Heart right ventricle (tissue), 16 donors: ENCODE measurements at regions of chr14 and their contacts with region 1.

Region 1: DNA sequence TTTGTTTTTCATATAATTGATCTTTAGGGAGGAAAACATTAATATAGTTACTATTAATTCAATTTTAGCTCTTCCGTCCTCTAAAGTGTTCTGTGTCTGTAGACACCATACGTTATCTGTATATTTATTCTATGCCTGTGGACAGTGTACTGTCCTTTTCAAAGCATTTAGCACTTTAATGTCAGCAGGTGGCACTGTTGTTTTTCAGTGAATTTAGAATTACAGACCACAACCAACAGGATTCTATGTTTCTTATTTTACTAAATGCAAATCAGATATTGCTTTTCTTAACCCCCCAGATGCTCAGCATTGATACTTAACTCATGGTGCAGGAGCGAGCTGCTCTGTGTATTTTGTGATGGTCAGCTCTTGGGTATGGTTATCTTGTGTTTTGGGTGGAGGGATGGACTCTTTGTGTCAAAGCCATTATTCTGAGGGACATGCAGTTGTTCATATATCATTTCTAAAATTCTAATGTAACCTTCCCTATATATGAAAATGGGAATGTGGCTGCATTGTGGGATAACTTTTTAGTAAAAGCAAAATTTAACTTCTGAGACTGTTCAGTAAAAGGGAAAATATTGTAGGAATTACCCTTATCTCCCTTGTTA is 65.2 kb downstream of the PAPOLA start:
- DNase-seq: no peak
- ATAC-seq: peak in 2 of 8 donors; percentile 42 to 47
- H3K4me3 ChIP-seq: no peak overlapping the region
- H3K27ac ChIP-seq: no peak overlapping the region
- H3K4me1 ChIP-seq: no peaks in the 10 kb centered on the region
- H3K27me3 ChIP-seq: no peaks in the 10 kb centered on the region
- CTCF ChIP-seq: peak; percentile 16 to 63 (median 53)

Region 2: DNA sequence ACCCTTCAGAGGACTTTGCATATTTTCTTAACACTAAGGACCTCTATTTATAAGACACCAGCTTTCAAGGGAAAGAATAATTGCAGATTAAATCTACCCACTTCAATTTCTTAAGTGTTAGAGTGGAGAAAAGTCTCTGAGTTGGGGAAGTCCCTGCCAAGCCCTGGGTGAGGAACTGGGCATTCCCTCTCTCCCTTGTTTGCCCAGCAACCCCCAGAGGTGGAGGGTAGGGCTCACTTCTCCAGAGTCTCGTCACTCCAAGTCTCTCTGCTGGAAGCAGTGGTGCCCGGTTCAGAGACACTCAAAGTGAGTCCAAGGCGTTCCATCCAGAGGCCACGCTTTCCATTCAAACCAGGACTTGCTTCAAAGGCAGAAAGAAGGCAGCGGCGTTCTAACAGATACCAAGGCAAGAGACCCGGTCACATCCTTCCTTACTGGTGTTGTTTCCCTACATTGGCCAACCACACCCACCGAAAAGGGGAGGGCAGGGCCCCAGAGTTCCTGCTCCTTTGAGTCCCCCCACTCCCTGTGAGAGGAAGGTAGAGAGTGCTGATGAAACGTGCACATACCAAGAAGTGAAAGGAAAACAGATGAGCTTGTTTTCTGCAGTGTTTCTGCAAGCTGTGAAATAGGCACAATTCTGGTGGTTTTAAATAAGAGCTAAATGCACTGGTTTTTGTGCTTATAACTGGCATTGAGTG is 368.8 kb before region 1 on chr14:
- intact Hi-C with region 1: no loop called
- DNase-seq: no peak
- ATAC-seq: peak in 3 of 8 donors; percentile 21 to 54 (median 48)
- H3K4me3 ChIP-seq: no peak overlapping the region
- H3K27ac ChIP-seq: peak overlapping the region in 5 of 10 donors; percentile 28 to 67 (median 52)
- H3K4me1 ChIP-seq: peaks cover 0 to 12% (median 6%) of the 10 kb centered on the region in 9 donors
- H3K27me3 ChIP-seq: peaks cover 0 to 44% (median 32%) of the 10 kb centered on the region in 7 donors
- CTCF ChIP-seq: no peak

Region 3: DNA sequence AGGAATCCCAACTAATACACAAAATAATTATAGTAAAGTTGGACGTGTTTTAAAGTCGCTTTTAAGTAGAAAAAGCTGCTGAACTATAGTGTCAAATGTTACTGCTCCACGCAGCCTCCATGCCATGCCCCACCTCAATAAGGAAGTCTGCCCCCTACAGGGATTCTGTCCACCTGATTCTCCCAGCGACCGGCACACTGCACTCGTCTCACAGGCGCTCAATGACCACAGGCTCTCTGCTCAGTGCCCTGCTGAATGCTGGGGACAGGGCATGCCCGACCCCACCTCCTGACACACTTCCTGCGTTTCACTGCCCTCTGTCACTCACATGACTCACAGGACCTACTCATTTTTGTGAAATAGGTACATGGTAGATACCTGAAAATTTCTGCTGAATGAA is 262.4 kb before region 1 on chr14:
- intact Hi-C with region 1: loop called in 1 of 10 experiments (anchors 10 kb)
- DNase-seq: no peak
- ATAC-seq: no peak
- H3K4me3 ChIP-seq: no peak overlapping the region
- H3K27ac ChIP-seq: no peak overlapping the region
- H3K4me1 ChIP-seq: no peaks in the 10 kb centered on the region
- H3K27me3 ChIP-seq: no peaks in the 10 kb centered on the region
- CTCF ChIP-seq: peak in 1 of 9 donors; percentile 15

Region 4: DNA sequence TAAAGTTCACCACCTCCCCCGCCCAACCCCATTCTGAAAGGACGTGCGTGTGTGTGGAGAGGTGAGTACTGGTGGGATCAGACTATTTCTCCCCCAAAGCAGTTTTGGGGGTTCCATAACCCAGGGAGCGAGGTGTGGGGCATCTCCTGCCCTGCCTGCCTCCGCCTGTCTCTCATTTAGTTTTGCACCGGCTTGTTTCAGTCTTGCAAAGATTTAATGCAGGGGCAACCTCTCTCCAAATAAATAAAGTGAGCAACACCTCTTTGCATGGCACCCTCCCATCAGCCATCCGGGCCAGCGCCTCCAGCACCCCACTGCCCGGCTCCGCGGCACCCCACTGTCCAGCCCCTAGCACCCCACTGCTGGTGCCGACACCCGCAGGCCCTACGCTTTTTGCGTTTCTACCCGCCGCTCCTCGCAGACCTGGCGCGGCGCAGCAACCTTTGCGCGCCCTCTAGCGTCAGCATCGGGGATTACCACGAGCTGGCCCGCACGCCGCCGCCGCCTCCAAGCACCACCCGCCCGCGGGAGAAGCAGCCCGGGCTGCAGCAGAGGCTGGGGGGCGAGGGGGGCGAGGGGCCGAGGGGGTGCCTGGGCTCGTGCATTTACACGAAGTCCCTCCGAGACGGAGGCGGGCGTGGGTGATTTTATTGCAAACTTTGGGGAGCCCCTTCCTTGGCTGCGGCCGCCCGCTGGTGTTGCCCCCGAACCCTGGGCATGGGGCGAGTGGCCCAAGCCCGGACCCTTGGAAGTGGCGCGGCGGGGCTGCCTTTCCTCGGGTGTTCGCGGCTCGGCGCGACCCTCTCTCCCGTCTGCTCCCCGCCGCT is 174.0 kb after region 1 on chr14:
- intact Hi-C with region 1: loop called in 4 of 10 experiments (anchors 2 to 5 kb)
- DNase-seq: peak; percentile 25 to 65
- ATAC-seq: peak; percentile 49 to 77 (median 68)
- H3K4me3 ChIP-seq: peak overlapping the region in 9 of 10 donors; percentile 15 to 50 (median 41)
- H3K27ac ChIP-seq: no peak overlapping the region
- H3K4me1 ChIP-seq: peaks cover 0 to 11% (median 8%) of the 10 kb centered on the region in 9 donors
- H3K27me3 ChIP-seq: peaks cover 4 to 99% (median 87%) of the 10 kb centered on the region in 7 donors
- CTCF ChIP-seq: peak; percentile 77 to 93 (median 87)